B cell (primary cell): ENCODE measurements at regions of chr17 and their contacts with region 1.

Region 1: DNA sequence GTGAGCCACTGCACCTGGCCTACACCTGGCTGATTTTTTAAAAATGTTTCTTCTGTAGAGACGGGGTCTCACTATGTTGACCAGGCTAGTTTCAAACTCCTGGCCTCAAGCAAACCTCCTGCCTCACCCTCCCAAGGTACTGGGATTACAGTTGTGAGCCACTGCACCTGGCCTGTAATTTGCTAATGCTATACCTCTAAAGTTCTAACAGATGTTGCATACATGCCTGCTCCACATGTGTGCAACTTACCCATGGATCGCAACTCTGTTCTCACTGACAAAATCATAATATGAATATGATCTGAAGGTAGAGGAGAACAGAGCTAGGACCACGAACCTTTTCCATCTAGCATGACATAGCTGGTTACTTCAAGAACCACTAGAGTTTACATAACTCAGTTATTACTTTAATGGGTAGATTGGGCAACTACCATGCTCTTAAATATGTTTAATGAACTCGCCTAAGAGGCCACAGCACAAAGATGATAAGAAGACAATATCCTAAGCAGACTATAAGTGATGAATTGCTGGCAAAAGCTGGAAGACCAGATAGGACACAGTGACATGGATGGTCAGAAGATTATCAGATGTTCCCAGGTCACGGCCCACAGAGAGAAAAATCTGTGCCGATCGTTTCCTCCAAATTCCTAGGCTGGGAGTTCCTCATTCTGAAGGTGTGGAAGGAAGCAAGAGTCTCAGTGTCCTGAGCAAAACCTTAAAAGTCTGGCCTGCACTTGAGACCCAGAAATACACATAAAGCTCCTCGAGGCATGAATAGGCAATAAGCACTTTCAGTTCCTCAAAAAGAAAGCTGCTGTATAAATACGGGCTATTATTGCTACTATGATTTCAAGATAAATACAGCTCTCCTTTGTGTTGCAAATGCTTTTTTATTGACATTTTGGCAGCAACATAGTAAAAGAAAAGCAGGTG is 53.6 kb upstream of the ICAM2 start:
- DNase-seq: peak; percentile 71
- ATAC-seq: peak; percentile 90
- H3K4me3 ChIP-seq: peak overlapping the region in 3 of 5 experiments; percentile 6 to 42 (median 13)
- H3K4me3 Mint-ChIP-seq: peak overlapping the region; percentile 53
- H3K27ac ChIP-seq: no peak overlapping the region
- H3K27ac Mint-ChIP-seq: peak overlapping the region; percentile 5
- H3K4me1 ChIP-seq: peaks cover 27 to 37% of the 10 kb centered on the region in 2 donors
- H3K4me1 Mint-ChIP-seq: peaks cover 33% of the 10 kb centered on the region
- H3K27me3 ChIP-seq: no peaks in the 10 kb centered on the region
- H3K27me3 Mint-ChIP-seq: no peaks in the 10 kb centered on the region
- CTCF ChIP-seq: no peak

Region 2: GRCh38 chr17:64063766-64064224 is 10.2 kb before region 1 on chr17:
- CTCF ChIA-PET with region 1: interaction called, 15 read pairs
- POLR2A ChIA-PET with region 1: no interaction called
- intact Hi-C with region 1: no loop called
- DNase-seq: peak; percentile 43
- ATAC-seq: no peak
- H3K4me3 ChIP-seq: no peak overlapping the region
- H3K4me3 Mint-ChIP-seq: no peak overlapping the region
- H3K27ac ChIP-seq: no peak overlapping the region
- H3K27ac Mint-ChIP-seq: peak overlapping the region; percentile 5
- H3K4me1 ChIP-seq: peaks cover 10% of the 10 kb centered on the region in 2 donors
- H3K4me1 Mint-ChIP-seq: peaks cover 20% of the 10 kb centered on the region
- H3K27me3 ChIP-seq: no peaks in the 10 kb centered on the region
- H3K27me3 Mint-ChIP-seq: no peaks in the 10 kb centered on the region
- CTCF ChIP-seq: peak; percentile 23